Right ventricle myocardium inferior (tissue), 1 donor: ENCODE measurements at regions of chr20 and their contacts with region 1.

Region 1: GRCh38 chr20:3888622-3889488 is at the start of gene PANK2:
- DNase-seq: peak; percentile 100
- ATAC-seq: peak; percentile 99
- total RNA-seq, gene PANK2: 16.6 TPM

Region 2: DNA sequence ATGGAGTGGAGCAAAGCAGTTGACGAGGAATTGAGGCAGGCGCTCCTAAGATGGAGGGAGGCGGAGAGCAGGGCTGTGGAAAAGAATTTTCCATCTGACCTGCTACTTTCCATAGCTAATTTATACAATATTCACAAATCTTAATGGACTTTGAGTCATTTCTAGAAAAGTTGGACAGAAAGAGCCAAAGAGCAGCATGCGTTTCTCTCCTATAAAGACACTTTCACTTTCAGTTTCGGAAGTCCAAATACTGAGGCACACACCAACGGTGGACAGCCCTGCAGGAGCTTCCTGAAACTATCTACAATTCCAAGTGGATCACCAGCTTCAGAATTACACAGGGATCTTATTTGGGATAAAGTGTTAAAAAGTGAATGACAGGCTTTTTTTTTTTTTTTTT is 43.8 kb after region 1 on chr20:
- intact Hi-C with region 1: loop called (anchors 5 kb)
- DNase-seq: no peak
- ATAC-seq: no peak

Region 3: DNA sequence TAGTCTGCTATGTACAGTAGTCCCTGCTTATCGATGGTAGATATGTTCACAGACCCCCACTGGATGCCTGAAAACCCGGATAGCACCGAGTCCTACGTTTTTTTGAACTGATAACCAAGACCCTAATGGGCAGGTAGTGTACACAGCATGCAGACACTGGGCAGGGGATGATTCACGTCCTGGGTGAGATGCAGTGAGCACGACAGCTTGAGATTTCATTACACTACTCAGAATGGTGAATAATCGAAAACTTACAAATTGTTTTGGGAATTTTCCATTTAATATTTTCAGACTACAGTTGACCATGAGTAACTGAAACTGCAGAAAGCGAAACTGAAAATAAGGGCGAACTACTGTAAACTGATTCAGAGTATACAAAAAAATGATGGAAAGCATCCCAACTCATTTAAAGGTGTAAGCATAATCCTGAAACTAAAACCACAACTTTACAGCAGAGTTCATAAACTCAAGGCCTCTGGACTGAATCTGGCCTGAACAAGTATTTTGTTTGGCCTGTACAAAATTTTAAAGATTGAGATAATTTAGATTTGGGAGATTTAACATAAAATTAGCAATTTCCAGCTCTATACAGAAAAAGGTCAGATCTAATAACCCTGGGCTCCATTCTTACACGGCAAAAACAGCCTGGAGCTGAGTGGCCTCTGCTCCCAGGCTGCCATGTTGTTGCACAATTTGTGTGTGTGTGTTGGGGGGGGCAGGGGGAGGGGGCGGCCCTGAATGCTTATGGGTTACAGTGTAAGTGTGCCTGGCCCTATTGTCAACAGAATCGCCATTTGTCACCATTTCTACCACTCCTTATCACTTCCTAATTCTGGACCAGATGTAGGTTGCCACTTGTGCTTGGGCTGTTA is 91.6 kb after region 1 on chr20:
- intact Hi-C with region 1: no loop called
- DNase-seq: no peak
- ATAC-seq: peak; percentile 54

Region 4: GRCh38 chr20:4073852-4074741 is 185.2 kb after region 1 on chr20:
- intact Hi-C with region 1: loop called (anchors 2 kb)
- DNase-seq: no peak
- ATAC-seq: no peak